Calu3 (cell line): ENCODE measurements at regions of chr15 and their contacts with region 1.

Region 1: GRCh38 chr15:69058830-69059556 is 44.5 kb downstream of the NOX5 start:
- DNase-seq: peak; percentile 90
- H3K4me3 Mint-ChIP-seq: no peak overlapping the region
- H3K27ac Mint-ChIP-seq: no peak overlapping the region
- H3K4me1 Mint-ChIP-seq: no peaks in the 10 kb centered on the region
- H3K27me3 Mint-ChIP-seq: peaks cover 44% of the 10 kb centered on the region
- CTCF ChIP-seq: peak; percentile 76

Region 2: GRCh38 chr15:69104050-69104750 is 45.2 kb after region 1 on chr15:
- CTCF ChIA-PET with region 1: no interaction called
- intact Hi-C with region 1: no loop called
- DNase-seq: no peak
- H3K4me3 Mint-ChIP-seq: no peak overlapping the region
- H3K27ac Mint-ChIP-seq: no peak overlapping the region
- H3K4me1 Mint-ChIP-seq: no peaks in the 10 kb centered on the region
- H3K27me3 Mint-ChIP-seq: peaks cover 90% of the 10 kb centered on the region
- CTCF ChIP-seq: no peak

Region 3: GRCh38 chr15:69160141-69160993 is 101.4 kb after region 1 on chr15 and contains the start of gene GLCE:
- CTCF ChIA-PET with region 1: interaction called, 4 read pairs
- intact Hi-C with region 1: loop called (anchors 5 kb)
- DNase-seq: peak; percentile 99
- H3K4me3 Mint-ChIP-seq: peak within 1 kb of the TSS; percentile 96
- H3K27ac Mint-ChIP-seq: peak within 1 kb of the TSS; percentile 89
- H3K4me1 Mint-ChIP-seq: peaks cover 29% of the 10 kb centered on the region
- H3K27me3 Mint-ChIP-seq: no peaks in the 10 kb centered on the region
- CTCF ChIP-seq: no peak
- total RNA-seq, gene GLCE: 20.4 and 22.4 TPM in 2 replicates

Region 4: DNA sequence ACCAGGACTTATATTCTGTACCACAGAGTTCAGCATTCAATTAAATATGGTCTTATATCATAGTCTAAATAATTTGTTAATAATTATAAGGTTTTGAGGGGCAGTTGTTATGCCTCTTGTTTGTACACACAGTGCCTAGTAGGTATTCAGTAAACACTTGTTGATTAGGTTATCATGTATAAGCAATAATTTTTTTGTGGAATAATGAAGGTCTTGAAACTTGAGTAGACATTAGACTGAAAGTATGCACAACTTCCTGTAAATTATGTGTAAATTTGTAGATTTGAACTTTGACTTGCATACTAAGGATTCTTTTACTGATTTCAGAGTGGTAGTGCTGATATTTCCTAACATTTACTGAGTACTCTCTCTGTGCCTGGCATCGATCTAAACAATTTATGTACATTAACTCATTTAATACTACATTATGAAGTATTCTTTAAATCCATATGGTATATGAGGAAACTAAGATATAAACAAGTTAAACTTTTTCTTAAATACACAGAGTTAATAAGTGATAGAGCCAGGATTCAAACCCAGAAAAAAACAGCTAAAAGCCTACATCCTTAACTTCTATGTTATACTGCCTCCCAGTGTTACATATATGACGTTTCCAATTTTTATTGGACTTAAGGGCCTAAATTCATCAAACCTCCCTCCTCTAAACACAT is 166.5 kb after region 1 on chr15:
- CTCF ChIA-PET with region 1: interaction called, 17 read pairs
- intact Hi-C with region 1: loop called (anchors 1 kb)
- DNase-seq: no peak
- H3K4me3 Mint-ChIP-seq: no peak overlapping the region
- H3K27ac Mint-ChIP-seq: no peak overlapping the region
- H3K4me1 Mint-ChIP-seq: peaks cover 10% of the 10 kb centered on the region
- H3K27me3 Mint-ChIP-seq: no peaks in the 10 kb centered on the region
- CTCF ChIP-seq: peak; percentile 23

Region 5: DNA sequence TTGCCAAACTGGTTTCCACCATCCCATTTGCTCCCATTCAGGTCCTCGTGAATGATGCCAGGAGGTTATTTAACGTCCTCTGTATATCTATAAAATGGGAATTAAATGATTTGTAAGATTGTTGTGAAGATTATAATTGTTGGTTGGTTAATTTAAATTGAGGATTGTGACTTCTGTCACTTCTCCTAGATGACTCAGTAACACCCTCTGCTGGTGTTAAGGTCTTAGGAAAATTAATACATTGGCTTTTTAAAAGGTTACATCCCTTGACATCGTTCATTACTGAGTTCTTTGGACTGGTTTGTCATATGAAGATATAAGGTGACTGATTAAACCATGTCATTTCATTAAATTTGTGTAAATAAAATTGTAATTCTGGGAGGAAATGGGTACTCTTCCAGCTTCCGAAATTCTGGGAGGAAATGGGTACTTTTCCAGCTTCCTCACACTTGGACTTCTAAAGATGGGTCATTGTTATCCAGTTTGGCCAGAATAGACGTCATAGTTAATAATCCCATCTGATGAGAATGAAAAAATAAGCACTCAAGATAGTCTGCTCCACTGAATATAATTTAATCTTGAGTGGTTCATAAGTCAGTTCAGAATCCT is 206.5 kb after region 1 on chr15:
- CTCF ChIA-PET with region 1: interaction called, 3 read pairs
- intact Hi-C with region 1: loop called (anchors 1 kb)
- DNase-seq: no peak
- H3K4me3 Mint-ChIP-seq: no peak overlapping the region
- H3K27ac Mint-ChIP-seq: no peak overlapping the region
- H3K4me1 Mint-ChIP-seq: no peaks in the 10 kb centered on the region
- H3K27me3 Mint-ChIP-seq: no peaks in the 10 kb centered on the region
- CTCF ChIP-seq: peak; percentile 32

Region 6: GRCh38 chr15:69394556-69395282 is 335.7 kb after region 1 on chr15:
- CTCF ChIA-PET with region 1: interaction called, 9 read pairs
- intact Hi-C with region 1: loop called (anchors 1 kb)
- DNase-seq: peak; percentile 92
- H3K4me3 Mint-ChIP-seq: no peak overlapping the region
- H3K27ac Mint-ChIP-seq: no peak overlapping the region
- H3K4me1 Mint-ChIP-seq: peaks cover 29% of the 10 kb centered on the region
- H3K27me3 Mint-ChIP-seq: no peaks in the 10 kb centered on the region
- CTCF ChIP-seq: peak; percentile 95

Region 7: DNA sequence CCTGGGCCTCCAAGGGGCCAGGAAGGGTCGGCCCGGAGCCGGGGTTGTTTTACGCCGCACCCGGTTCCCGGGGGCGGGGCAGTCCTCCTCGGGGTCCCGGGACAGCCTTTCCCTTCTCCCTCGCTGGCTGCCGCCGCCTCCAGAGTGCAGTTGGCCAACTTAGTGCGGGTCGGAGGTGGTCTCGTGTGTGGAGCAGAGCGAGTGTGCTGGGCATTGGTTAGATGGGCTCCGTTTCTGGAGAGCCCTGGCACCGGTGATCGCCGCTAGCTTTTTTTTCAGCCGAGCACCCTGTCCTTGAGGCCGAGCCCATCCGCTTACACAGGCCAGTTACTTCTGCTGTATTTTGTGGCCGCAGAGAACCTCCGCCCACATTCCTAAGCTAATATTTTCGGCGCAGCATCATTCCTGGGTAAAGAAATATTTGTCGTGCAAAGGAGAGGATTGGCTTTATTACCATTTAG is 355.7 kb after region 1 on chr15:
- CTCF ChIA-PET with region 1: interaction called, 3 read pairs
- intact Hi-C with region 1: loop called (anchors 1 kb)
- DNase-seq: peak; percentile 72
- H3K4me3 Mint-ChIP-seq: peak overlapping the region; percentile 80
- H3K27ac Mint-ChIP-seq: peak overlapping the region; percentile 69
- H3K4me1 Mint-ChIP-seq: peaks cover 16% of the 10 kb centered on the region
- H3K27me3 Mint-ChIP-seq: no peaks in the 10 kb centered on the region
- CTCF ChIP-seq: no peak

Region 8: GRCh38 chr15:69881766-69882165 is 822.8 kb after region 1 on chr15:
- CTCF ChIA-PET with region 1: no interaction called
- intact Hi-C with region 1: no loop called
- DNase-seq: no peak
- H3K4me3 Mint-ChIP-seq: no peak overlapping the region
- H3K27ac Mint-ChIP-seq: no peak overlapping the region
- H3K4me1 Mint-ChIP-seq: no peaks in the 10 kb centered on the region
- H3K27me3 Mint-ChIP-seq: peaks cover 84% of the 10 kb centered on the region
- CTCF ChIP-seq: no peak

Region 9: GRCh38 chr15:69958494-69959084 is 899.6 kb after region 1 on chr15:
- CTCF ChIA-PET with region 1: no interaction called
- intact Hi-C with region 1: no loop called
- DNase-seq: no peak
- H3K4me3 Mint-ChIP-seq: no peak overlapping the region
- H3K27ac Mint-ChIP-seq: no peak overlapping the region
- H3K4me1 Mint-ChIP-seq: no peaks in the 10 kb centered on the region
- H3K27me3 Mint-ChIP-seq: peaks cover 79% of the 10 kb centered on the region
- CTCF ChIP-seq: no peak